GM10248 (cell line): ENCODE measurements at regions of chr17 and their contacts with region 1.

Region 1: GRCh38 chr17:40219073-40219860 is at the start of gene WIPF2:
- DNase-seq: peak; percentile 96
- CTCF ChIP-seq: peak; percentile 25

Region 2: DNA sequence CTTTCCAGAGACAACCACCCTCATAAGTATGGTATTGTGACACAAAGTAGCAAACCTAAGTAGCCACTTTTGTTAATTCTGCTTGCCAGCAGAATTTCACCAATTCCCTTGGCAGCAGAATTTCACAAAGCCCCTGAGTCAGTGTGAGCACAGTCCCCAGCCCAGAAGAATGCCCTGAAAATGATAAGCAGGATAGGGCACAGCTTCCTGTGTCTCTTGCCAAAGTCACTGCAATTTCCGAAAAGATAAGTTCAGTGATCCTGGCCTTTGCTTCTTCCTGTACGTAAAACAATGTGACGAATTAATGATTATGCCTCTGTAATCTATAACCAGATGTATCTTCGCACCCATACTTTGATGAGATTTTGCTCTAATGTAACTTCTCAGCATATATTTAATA is 16.1 kb before region 1 on chr17:
- CTCF ChIA-PET with region 1: interaction called, 27 read pairs
- POLR2A ChIA-PET with region 1: no interaction called
- DNase-seq: no peak
- CTCF ChIP-seq: no peak

Region 3: GRCh38 chr17:40230670-40231069 is 11.4 kb after region 1 on chr17:
- CTCF ChIA-PET with region 1: interaction called, 18 read pairs
- POLR2A ChIA-PET with region 1: interaction called, 4 read pairs
- DNase-seq: no peak
- CTCF ChIP-seq: no peak

Region 4: GRCh38 chr17:40686192-40686591 is 466.9 kb after region 1 on chr17:
- CTCF ChIA-PET with region 1: no interaction called
- POLR2A ChIA-PET with region 1: no interaction called
- DNase-seq: no peak
- CTCF ChIP-seq: no peak